ENCODE measurements at regions of chr1 and their contacts with region 1.

Region 1: GRCh38 chr1:155117617-155118016 is 10.1 kb upstream of the EFNA1 start:
- H3K4me3 ChIP-seq: no peak overlapping the region
- H3K27ac ChIP-seq: no peak overlapping the region
- H3K4me1 ChIP-seq: no peaks in the 10 kb centered on the region
- CTCF ChIP-seq: no peak

Region 2: GRCh38 chr1:155063550-155064110 is 54.0 kb before region 1 on chr1 and contains the start of gene EFNA4:
- CTCF ChIA-PET with region 1: interaction called, 13 read pairs
- POLR2A ChIA-PET with region 1: no interaction called
- H3K4me3 ChIP-seq: peak within 1 kb of the TSS; percentile 88
- H3K27ac ChIP-seq: peak within 1 kb of the TSS; percentile 64; the same call in 1 of the 2 replicates
- H3K4me1 ChIP-seq: no peaks in the 10 kb centered on the region; the same call in none of the 2 replicates
- CTCF ChIP-seq: no peak

Region 3: DNA sequence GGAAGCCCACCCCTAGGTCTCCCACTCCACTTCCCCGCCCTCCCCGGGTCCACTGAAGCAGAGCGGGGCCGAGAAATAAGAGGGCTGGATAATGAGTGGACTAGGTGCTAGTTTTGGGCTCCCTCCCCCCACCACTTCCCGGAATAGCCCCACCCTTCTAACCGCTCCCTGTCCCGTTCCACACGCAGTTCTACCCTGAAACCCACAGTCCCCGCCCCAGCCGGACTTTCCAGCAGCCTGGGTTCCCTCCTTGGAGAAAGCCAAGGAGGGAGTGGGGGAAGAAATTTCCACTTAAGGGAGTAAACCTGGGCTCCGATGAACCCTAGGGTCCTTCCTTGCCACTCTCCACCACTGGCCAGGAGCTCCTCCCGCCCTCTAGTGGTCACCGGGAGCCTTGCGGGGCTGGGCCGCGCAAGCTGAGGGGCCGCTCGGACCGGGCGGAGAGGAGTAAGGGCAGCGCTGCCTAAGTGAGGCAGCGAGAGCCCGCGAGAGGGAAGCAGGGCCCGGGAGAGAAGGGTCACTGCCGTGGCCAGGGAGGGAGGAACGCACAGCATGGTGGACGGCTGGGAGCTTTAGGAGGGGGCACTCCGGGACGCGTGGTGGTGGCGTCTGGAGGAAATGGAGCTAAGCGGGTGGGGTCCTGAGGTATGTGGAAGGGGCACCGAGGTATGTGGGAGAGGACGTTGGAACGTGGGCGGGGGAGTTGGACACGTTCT is 75.8 kb after region 1 on chr1:
- CTCF ChIA-PET with region 1: no interaction called
- POLR2A ChIA-PET with region 1: no interaction called
- H3K4me3 ChIP-seq: peak overlapping the region; percentile 40
- H3K27ac ChIP-seq: peak overlapping the region; percentile 42; the same call in 1 of the 2 replicates
- H3K4me1 ChIP-seq: peaks cover 3% of the 10 kb centered on the region; the same call in 1 of the 2 replicates
- CTCF ChIP-seq: peak; percentile 98